ENCODE measurements at regions of chr3 and their contacts with region 1.

Region 1: DNA sequence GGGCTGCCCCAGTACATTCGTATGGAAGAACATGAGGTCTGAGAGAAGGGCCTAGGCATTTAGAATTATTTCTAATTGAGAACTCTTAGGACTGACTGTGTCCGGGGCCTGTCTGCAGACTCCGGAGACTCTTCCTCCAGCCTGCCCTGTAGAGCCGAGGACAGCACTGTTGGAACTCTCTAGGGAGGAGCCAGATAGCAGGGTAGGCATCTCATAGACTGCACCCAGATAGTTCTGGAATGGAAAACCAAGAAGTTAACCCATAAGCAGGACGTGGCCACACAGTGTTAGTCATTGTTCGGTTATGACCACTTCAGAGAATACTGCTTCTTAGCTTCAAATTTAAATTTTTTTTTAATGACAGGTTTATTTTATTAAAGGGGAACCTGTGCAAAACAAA is 59.5 kb downstream of the SNRK start:
- DNase-seq: no peak
- H3K4me3 Mint-ChIP-seq: peak overlapping the region; percentile 20
- H3K27ac Mint-ChIP-seq: peak overlapping the region; percentile 85
- H3K4me1 Mint-ChIP-seq: peaks cover 56% of the 10 kb centered on the region
- H3K27me3 Mint-ChIP-seq: no peaks in the 10 kb centered on the region

Region 2: GRCh38 chr3:43326891-43327581 is 18.8 kb before region 1 on chr3:
- intact Hi-C with region 1: loop called (anchors 2 kb)
- DNase-seq: no peak
- H3K4me3 Mint-ChIP-seq: no peak overlapping the region
- H3K27ac Mint-ChIP-seq: peak overlapping the region; percentile 56
- H3K4me1 Mint-ChIP-seq: peaks cover 36% of the 10 kb centered on the region
- H3K27me3 Mint-ChIP-seq: no peaks in the 10 kb centered on the region

Region 3: GRCh38 chr3:43389388-43390254 is 43.7 kb after region 1 on chr3:
- intact Hi-C with region 1: loop called (anchors 5 kb)
- DNase-seq: peak; percentile 77
- H3K4me3 Mint-ChIP-seq: no peak overlapping the region
- H3K27ac Mint-ChIP-seq: peak overlapping the region; percentile 71
- H3K4me1 Mint-ChIP-seq: peaks cover 35% of the 10 kb centered on the region
- H3K27me3 Mint-ChIP-seq: peaks cover 15% of the 10 kb centered on the region